ENCODE measurements at regions of chr1 and their contacts with region 1.

Region 1: GRCh38 chr1:53326088-53326597 is 1.7 kb downstream of the LRP8 start:
- DNase-seq: peak; percentile 88
- H3K4me3 ChIP-seq: peak overlapping the region; percentile 45 to 64 (median 62)
- H3K27ac ChIP-seq: peak overlapping the region; percentile 10 to 56 (median 38)
- H3K4me1 ChIP-seq: peaks cover 0 to 28% (median 27%) of the 10 kb centered on the region in 4 donors
- H3K27me3 ChIP-seq: no peaks in the 10 kb centered on the region
- CTCF ChIP-seq: no peak
- EP300 ChIP-seq: no peak
- POLR2A ChIP-seq: no peak

Region 2: GRCh38 chr1:53238197-53239155 is 87.7 kb before region 1 on chr1 and contains the start of gene MAGOH:
- intact Hi-C with region 1: loop called (anchors 5 kb)
- DNase-seq: peak; percentile 97
- H3K4me3 ChIP-seq: peak within 1 kb of the TSS; percentile 87 to 97 (median 92)
- H3K27ac ChIP-seq: peak within 1 kb of the TSS; percentile 76 to 86 (median 80)
- H3K4me1 ChIP-seq: peaks cover 0 to 25% (median 21%) of the 10 kb centered on the region in 4 donors
- H3K27me3 ChIP-seq: no peaks in the 10 kb centered on the region
- CTCF ChIP-seq: no peak
- EP300 ChIP-seq: peak in 1 of 4 donors; percentile 7
- POLR2A ChIP-seq: peak; percentile 64 to 74
- total RNA-seq, gene MAGOH: 12.2 to 46.4 (median 28.7) TPM

Measured in sigmoid colon (tissue), 7 donors.